ENCODE measurements at regions of chr7 and their contacts with region 1.

Region 1: GRCh38 chr7:2709553-2710285 is 21.7 kb downstream of the AMZ1 start:
- DNase-seq: no peak
- H3K4me3 ChIP-seq: no peak overlapping the region
- CTCF ChIP-seq: peak; percentile 94

Region 2: DNA sequence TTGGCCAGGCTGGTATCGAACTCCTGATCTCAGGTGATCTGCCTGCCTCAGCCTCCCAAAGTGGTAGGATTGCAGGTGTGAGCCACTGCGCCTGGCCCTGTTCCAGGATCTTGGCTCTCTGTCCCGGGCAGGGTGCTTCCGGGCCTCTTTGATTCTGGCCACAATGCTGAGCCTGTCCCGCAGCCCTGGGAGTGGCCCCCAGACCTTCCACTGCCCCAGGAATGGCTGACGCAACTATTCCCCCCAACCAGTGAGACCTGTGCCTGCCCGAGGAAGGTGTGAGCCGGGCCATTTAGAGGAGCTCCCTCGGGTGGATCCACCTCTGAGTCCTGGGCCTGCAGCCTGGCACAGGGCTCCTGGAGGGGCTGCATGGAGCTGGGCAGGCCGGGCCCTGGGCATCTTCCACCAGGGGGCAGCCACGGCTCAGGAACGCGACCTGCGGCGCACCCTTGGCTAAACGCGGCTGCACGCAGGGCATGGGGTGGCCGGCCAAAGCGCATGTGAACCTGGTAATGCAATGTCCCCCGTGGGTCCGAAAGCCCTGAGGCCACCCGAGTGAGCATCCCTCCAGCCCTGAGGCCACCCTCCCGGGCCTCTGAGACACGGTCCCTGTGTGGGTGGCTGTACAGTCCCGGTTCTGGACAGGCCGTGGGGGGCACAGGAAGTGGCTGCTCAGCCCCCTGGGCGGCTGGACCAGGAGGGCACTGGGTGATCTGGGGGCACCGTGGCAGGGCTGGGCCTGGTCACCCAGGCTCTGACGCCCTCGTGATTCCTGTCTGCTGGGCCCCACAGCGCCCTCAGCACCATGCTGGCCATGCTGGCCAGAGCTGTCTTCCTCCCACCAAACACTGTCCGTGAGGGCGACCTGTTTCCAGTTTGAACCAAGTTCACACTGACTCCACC is 258.3 kb before region 1 on chr7:
- CTCF ChIA-PET with region 1: interaction called, 38 read pairs
- POLR2A ChIA-PET with region 1: no interaction called
- DNase-seq: no peak
- H3K4me3 ChIP-seq: peak overlapping the region; percentile 38
- CTCF ChIP-seq: peak; percentile 99

Region 3: GRCh38 chr7:2670720-2671391 is 38.9 kb before region 1 on chr7:
- CTCF ChIA-PET with region 1: interaction called, 21 read pairs
- POLR2A ChIA-PET with region 1: no interaction called
- DNase-seq: no peak
- H3K4me3 ChIP-seq: no peak overlapping the region
- CTCF ChIP-seq: peak; percentile 96

Region 4: GRCh38 chr7:2689951-2690705 is 19.6 kb before region 1 on chr7:
- CTCF ChIA-PET with region 1: interaction called, 14 read pairs
- POLR2A ChIA-PET with region 1: no interaction called
- DNase-seq: no peak
- H3K4me3 ChIP-seq: no peak overlapping the region
- CTCF ChIP-seq: no peak

Region 5: DNA sequence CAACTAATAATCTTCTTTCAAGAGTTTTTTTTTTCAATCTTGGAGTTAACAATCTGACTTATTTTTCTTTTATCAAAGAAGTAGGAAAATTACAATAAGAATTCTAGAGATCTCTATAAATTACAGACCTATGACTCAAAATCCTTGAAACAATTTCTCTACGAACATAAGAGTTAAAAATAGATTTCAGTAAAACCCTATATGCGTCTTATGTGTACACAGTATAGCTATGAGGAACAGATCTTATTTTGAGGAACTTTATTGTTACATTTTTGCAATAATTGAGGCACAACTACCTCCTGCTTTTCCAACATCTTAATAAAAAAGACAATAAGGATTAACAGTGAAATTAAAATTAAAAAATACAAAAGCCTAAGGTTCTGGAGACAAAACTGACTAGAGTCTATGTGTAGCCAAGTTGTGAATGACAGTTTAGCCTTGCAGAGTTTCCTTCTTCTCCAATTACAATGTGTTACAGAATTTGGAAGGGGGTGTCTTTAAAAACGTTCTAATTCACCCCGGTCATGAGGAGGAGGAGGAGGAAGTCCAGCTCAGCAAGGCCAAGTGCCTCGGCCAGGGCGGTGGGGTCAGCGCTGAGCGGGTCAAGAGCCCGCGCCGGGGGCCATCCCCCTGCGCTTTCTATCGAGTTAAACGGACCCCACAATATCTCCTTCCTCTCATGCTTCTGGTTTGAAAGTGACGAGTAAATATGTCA is 18.8 kb after region 1 on chr7:
- CTCF ChIA-PET with region 1: interaction called, 18 read pairs
- POLR2A ChIA-PET with region 1: interaction called, 3 read pairs
- DNase-seq: no peak
- H3K4me3 ChIP-seq: no peak overlapping the region
- CTCF ChIP-seq: no peak

Region 6: GRCh38 chr7:2750004-2750407 is 40.3 kb after region 1 on chr7:
- CTCF ChIA-PET with region 1: no interaction called
- POLR2A ChIA-PET with region 1: no interaction called
- DNase-seq: no peak
- H3K4me3 ChIP-seq: no peak overlapping the region
- CTCF ChIP-seq: no peak

Region 7: GRCh38 chr7:2821161-2821841 is 111.6 kb after region 1 on chr7:
- CTCF ChIA-PET with region 1: no interaction called
- POLR2A ChIA-PET with region 1: no interaction called
- DNase-seq: no peak
- H3K4me3 ChIP-seq: no peak overlapping the region
- CTCF ChIP-seq: no peak

Region 8: GRCh38 chr7:2844165-2844898 is 134.6 kb after region 1 on chr7 and contains the start of gene GNA12:
- CTCF ChIA-PET with region 1: interaction called, 10 read pairs
- POLR2A ChIA-PET with region 1: no interaction called
- DNase-seq: peak; percentile 82
- H3K4me3 ChIP-seq: peak within 1 kb of the TSS; percentile 78
- CTCF ChIP-seq: no peak